SK-N-SH (cell line): ENCODE measurements at regions of chr7 and their contacts with region 1.

Region 1: GRCh38 chr7:117034851-117035464 is 81.7 kb downstream of the ST7 start:
- DNase-seq: no peak
- H3K4me3 ChIP-seq: no peak overlapping the region
- H3K27ac ChIP-seq: peak overlapping the region in 1 of 2 experiments; percentile 13; a peak in 1 of 4 replicates
- H3K4me1 ChIP-seq: peaks cover 0 to 22% of the 10 kb centered on the region in 2 experiments; a peak in 3 of 4 replicates
- H3K27me3 ChIP-seq: no peaks in the 10 kb centered on the region
- CTCF ChIP-seq: no peak
- EP300 ChIP-seq: no peak
- RAD21 ChIP-seq: no peak

Region 2: DNA sequence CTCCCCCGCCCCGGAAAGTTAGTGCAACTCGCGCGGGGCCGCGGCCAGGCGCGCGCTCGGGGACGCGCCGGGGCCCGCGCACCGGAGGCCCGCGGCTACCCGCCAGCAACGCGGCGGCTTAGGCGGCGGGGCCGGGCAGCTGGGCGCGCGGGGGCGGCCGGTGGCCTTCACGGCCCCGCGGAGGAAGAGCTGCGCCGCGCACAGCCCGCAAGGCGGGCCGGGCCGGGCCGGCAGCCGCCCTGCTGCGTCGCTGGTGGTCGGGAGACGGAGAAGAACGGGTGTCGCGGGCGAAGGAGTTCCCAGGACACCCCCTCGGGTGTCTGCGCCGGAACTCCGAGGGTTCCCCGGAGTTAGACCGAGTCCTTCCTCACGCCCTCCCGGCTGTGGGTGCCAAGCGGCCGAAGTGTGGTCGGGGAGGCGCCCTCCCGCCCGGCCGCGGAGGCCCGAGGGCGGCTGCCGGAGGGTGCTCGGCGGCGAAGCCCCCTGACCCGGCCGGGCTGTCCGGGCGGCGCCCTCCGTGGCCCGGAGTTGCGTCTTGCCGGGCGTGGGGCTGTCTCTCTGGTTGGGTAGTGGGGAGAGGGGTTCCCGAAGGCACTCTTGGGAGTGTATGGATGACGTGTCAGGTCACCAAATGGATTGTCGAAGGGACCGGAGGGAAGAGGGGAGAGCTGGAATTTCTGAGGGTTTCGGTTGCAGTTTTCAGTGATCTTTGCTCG is 81.1 kb before region 1 on chr7:
- CTCF ChIA-PET with region 1: no interaction called
- POLR2A ChIA-PET with region 1: no interaction called
- DNase-seq: peak; percentile 92
- H3K4me3 ChIP-seq: peak overlapping the region; percentile 85 to 91
- H3K27ac ChIP-seq: peak overlapping the region; percentile 97
- H3K4me1 ChIP-seq: peaks cover 19 to 23% of the 10 kb centered on the region in 2 experiments; a peak in 3 of 4 replicates
- H3K27me3 ChIP-seq: no peaks in the 10 kb centered on the region
- CTCF ChIP-seq: no peak; the same call in 1 of the 2 replicates
- EP300 ChIP-seq: peak in 1 of 2 experiments; percentile 28; a peak in 1 of 4 replicates
- RAD21 ChIP-seq: no peak

Region 3: DNA sequence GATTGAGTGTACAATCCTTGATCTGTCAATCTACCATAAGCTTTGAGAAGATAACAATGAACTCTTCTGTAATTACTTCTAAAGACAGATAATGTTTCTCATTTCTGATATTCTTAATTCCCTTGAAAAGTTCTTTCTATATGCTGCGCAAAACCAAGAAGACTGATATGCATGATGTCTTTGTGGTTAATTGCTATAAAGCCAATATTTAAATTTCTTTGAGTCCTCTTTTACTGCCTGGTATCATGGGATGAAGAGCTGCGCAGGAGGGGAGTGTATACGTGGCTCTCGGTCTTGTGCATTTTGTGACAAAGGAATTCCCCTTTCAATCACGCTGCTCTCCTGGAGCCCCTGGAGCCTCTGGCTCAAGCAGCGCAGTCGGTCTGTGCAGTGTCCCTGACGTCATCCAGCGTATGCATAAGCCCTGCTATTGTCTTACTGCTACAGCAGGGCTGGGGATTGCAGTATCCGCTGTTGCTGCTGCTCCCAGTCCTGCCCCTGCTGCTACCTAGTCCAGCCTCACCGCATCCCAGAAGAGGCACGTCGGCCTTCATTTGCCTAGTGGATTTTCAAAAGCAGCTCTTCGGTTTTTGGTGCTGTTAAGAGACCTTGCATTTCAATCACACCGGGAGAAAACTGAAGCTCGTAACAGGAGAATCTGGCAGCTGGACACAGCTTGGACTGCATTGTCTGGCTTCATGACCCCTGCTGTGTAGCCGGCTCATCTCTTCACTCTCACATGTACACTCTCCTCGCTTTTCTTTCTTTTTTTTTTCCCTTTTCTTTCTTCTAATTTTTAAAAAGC is 15.0 kb before region 1 on chr7:
- CTCF ChIA-PET with region 1: interaction called, 21 read pairs
- POLR2A ChIA-PET with region 1: no interaction called
- DNase-seq: peak; percentile 78
- H3K4me3 ChIP-seq: peak overlapping the region; percentile 48 to 53
- H3K27ac ChIP-seq: peak overlapping the region; percentile 84 to 86
- H3K4me1 ChIP-seq: peaks cover 10 to 39% of the 10 kb centered on the region in 2 experiments; a peak in 3 of 4 replicates
- H3K27me3 ChIP-seq: no peaks in the 10 kb centered on the region
- CTCF ChIP-seq: no peak
- EP300 ChIP-seq: peak in 1 of 2 experiments; percentile 45; a peak in 1 of 4 replicates
- RAD21 ChIP-seq: 0 out of 2 replicates have a peak, but pooled peaks have one; percentile 18